PC-9 (cell line): ENCODE measurements at regions of chr12 and their contacts with region 1.

Region 1: DNA sequence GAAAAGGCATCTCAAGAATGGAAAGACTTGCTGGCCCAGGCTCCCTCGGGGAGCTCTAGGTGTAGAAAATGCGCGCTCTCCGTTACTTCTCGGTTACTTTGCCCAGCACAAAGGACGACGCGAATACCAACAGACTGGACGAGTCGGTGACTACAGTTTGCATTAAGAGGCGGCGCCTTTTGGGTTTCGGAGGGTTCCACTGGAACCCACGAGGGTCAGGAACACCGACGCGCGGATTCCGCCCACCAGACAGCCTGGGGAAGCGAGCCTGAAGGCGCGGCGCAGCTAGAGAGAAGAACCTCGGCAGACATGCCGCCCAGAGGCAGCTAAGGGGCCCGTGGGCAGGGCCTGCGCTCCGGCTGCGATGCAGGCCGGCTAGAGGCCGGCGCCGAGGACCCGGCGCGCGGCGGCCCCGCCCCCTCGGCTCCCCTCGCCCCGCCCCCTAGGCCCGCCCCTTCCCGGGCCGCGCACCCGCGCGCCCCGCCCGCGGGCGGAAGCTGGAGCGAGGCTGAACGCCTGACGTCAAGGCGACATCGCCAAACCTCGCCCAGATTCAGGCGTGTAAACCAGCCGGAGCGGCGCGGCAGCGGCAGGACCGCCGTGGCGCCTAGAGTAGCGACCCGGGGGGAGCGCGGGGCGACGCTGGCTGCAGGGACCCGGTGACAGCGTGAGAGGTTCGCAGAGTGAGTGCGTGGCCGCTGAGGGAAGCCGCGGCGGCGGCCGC is at the start of gene RAP1B:
- DNase-seq: peak; percentile 66 to 89
- H3K4me3 ChIP-seq: peak within 1 kb of the TSS; percentile 97
- H3K27ac ChIP-seq: peak within 1 kb of the TSS; percentile 60
- H3K4me1 ChIP-seq: peaks cover 25% of the 10 kb centered on the region
- H3K27me3 ChIP-seq: no peaks in the 10 kb centered on the region
- CTCF ChIP-seq: no peak
- total RNA-seq, gene RAP1B: 59.0 and 89.7 TPM in 2 replicates

Region 2: GRCh38 chr12:68364893-68365725 is 245.4 kb before region 1 on chr12:
- CTCF ChIA-PET with region 1: no interaction called
- POLR2A ChIA-PET with region 1: no interaction called
- intact Hi-C with region 1: loop called (anchors 1 kb)
- DNase-seq: peak; percentile 93 to 95
- H3K4me3 ChIP-seq: peak overlapping the region; percentile 55
- H3K27ac ChIP-seq: peak overlapping the region; percentile 87
- H3K4me1 ChIP-seq: peaks cover 19% of the 10 kb centered on the region
- H3K27me3 ChIP-seq: no peaks in the 10 kb centered on the region
- CTCF ChIP-seq: no peak

Region 3: DNA sequence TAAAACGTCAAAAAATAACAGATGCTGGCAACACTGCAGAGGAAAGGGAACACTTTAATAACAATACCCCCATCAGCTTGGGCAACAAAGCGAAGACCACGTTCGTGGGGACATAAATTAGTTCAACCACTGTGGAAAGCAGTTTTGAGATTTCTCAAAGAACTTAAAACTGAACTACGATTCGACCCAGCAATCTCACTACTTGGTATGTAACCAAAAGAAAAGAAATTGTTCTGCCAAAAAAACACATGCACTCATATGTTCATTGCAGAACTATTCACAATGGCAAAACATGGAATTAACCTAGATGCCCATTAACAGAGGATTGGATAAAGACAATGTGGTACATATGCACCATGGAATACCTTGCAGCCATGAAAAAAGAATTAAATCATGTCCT is 81.1 kb before region 1 on chr12:
- CTCF ChIA-PET with region 1: no interaction called
- POLR2A ChIA-PET with region 1: no interaction called
- intact Hi-C with region 1: loop called (anchors 5 kb)
- DNase-seq: no peak
- H3K4me3 ChIP-seq: no peak overlapping the region
- H3K27ac ChIP-seq: no peak overlapping the region
- H3K4me1 ChIP-seq: no peaks in the 10 kb centered on the region
- H3K27me3 ChIP-seq: no peaks in the 10 kb centered on the region
- CTCF ChIP-seq: no peak

Region 4: DNA sequence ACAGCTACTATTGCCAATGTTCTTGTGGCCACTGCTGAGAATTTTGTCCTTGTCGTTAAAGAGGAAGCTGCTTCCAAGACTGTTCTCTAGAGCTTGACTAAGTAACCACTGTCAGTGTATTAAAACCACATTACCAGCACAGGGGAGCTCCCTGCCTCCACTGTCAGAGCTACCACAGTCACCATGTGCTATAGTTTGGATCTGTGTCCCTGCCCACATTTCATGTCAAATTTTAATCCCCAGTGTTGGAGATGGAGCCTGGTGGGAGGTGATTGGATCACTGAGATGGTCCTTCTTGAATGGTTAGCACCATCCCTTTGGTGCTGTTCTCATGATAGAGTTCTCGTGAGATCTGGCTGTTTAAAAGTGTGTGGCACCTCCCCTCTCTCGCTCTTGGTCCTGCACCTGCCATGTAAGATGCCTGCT is 23.1 kb before region 1 on chr12:
- CTCF ChIA-PET with region 1: interaction called, 3 read pairs
- POLR2A ChIA-PET with region 1: no interaction called
- intact Hi-C with region 1: loop called (anchors 2 kb)
- DNase-seq: no peak
- H3K4me3 ChIP-seq: no peak overlapping the region
- H3K27ac ChIP-seq: no peak overlapping the region
- H3K4me1 ChIP-seq: peaks cover 19% of the 10 kb centered on the region
- H3K27me3 ChIP-seq: no peaks in the 10 kb centered on the region
- CTCF ChIP-seq: no peak

Region 5: GRCh38 chr12:68686595-68687521 is 76.3 kb after region 1 on chr12 and contains the start of gene NUP107:
- CTCF ChIA-PET with region 1: no interaction called
- POLR2A ChIA-PET with region 1: no interaction called
- intact Hi-C with region 1: loop called (anchors 2 kb)
- DNase-seq: peak; percentile 97 to 99
- H3K4me3 ChIP-seq: peak within 1 kb of the TSS; percentile 97
- H3K27ac ChIP-seq: peak within 1 kb of the TSS; percentile 87
- H3K4me1 ChIP-seq: peaks cover 24% of the 10 kb centered on the region
- H3K27me3 ChIP-seq: no peaks in the 10 kb centered on the region
- CTCF ChIP-seq: no peak
- total RNA-seq, gene NUP107: 75.7 and 84.9 TPM in 2 replicates